ENCODE measurements at regions of chr11 and their contacts with region 1.

Region 1: DNA sequence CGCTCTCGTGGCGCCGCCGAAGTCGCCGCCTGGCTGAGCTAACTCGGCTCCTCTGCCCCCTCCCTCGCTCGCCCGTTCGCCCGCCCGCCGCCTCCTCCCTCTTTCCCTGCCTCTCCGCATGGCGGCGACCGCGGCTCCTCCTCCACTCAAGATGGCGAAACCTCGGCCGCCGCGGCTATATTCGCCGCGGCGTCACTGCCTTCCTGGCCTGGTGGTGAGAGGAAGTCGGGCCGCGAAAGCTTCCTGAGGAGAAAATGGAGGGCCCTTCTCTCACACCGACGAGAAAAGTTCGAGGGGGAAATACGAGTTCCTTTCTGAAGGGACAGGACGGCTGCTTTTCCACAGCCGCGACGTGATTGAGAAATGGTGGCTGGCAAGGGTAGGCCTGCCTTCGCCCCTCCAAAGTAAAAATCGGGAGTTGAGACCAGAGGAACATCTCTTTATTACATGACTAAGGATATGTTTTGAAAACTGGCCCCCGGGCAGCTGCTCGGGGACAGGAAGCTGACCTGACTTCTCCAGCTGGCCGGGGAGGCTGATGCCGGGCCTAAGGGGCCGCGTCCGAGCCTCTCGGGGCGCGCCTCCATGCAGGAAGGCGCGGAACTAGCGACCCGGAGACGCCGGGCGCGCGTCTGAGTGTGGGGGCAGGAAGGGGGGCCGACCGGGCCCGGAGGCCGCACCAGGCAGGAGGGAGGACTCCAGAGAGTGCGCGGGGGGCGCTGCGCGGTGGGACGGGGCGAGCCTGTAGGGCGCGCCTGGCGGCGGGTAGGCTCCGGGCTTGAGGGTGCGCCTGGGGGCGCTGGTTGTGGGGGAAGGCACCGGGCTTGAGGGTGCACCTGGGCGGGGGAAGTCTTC is at the start of gene DDX6:
- DNase-seq: peak; percentile 86 to 93 (median 91)
- H3K4me3 ChIP-seq: peak within 1 kb of the TSS; percentile 82 to 98 (median 95)
- H3K27ac ChIP-seq: peak within 1 kb of the TSS; percentile 98 to 99
- H3K4me1 ChIP-seq: peaks cover 5 to 33% (median 29%) of the 10 kb centered on the region in 4 experiments
- H3K27me3 ChIP-seq: no peaks in the 10 kb centered on the region

Region 2: DNA sequence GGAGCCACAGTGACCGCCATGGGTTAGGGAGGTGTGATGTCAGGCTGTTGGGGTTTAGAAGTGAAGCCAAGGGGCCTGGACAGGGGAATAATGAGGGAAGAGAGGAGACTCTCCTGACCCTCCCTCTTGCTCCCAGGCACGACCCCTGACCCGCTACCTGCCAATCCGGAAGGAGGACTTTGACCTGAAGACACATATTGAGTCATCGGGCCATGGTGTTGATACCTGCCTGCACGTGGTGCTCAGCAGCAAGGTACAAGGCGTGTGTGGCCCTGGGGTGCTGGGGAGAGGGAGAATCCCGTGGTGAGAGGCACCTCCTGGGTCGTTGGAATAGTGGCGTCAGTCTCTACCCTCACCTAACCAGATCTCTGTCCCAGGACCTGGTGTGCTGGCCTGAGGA is 141.4 kb before region 1 on chr11:
- CTCF ChIA-PET with region 1: no interaction called
- POLR2A ChIA-PET with region 1: no interaction called
- DNase-seq: no peak
- H3K4me3 ChIP-seq: no peak overlapping the region
- H3K27ac ChIP-seq: no peak overlapping the region
- H3K4me1 ChIP-seq: peaks cover 0 to 18% (median 13%) of the 10 kb centered on the region in 4 experiments
- H3K27me3 ChIP-seq: no peaks in the 10 kb centered on the region

Region 3: DNA sequence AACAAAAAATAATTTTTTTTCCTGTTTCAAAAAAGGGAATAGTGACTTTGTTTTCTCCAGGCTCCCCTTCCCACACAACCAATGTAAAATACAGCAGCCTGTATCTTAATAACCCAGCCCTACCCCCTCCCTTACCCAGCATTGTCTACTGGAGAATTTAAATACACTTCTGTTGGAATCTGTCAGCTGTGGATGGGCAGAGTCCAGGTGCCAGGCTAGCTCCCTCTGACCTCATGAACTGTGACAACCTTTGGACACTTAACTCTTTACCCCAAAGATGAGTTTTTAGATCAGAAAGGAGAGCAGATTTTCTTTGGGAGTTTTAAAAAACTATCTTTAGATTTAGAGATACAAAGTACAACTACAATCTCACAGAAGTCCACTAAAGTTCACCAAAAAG is 43.3 kb before region 1 on chr11:
- CTCF ChIA-PET with region 1: no interaction called
- POLR2A ChIA-PET with region 1: no interaction called
- DNase-seq: no peak
- H3K4me3 ChIP-seq: no peak overlapping the region
- H3K27ac ChIP-seq: no peak overlapping the region
- H3K4me1 ChIP-seq: no peaks in the 10 kb centered on the region
- H3K27me3 ChIP-seq: no peaks in the 10 kb centered on the region

Region 4: DNA sequence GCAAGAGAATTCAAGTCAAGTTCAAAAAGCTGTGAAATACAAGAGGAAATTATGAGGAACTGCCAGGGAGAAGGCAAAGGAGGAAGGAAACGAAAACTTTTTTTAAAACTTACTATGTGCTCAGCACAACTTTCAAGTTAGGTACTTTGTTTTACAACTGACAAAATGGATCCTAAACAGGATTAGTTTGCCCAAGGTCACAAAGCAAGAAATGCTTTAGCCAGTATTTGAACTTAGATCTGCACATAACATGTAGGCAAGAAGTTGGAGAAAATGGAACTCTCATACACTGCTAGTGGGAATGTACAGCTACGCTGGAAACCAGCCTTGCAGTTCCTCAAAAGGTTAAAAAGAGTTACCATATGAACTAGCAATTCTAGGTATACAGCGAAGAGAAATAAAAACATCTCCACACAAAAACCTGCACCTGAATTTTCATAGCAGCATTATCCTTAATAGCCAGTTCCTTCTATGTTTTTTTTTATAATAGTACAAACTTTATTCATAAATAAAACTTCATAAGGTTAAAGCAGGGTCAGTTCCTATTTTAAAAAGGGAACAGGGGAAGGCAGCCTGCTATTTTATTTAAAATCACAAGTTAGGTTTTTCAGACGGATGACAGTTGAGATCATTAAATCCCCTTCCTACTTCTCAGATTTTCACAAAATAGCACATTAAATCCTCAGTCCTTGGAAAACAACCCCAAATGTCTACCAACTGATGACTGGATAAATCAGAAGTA is 19.6 kb before region 1 on chr11:
- CTCF ChIA-PET with region 1: interaction called, 11 read pairs
- POLR2A ChIA-PET with region 1: interaction called, 4 read pairs
- DNase-seq: peak in 2 of 3 donors; percentile 26 to 41
- H3K4me3 ChIP-seq: peak overlapping the region in 3 of 7 experiments; percentile 1 to 39 (median 34)
- H3K27ac ChIP-seq: peak overlapping the region in 1 of 2 experiments; percentile 47
- H3K4me1 ChIP-seq: peaks cover 8 to 25% (median 18%) of the 10 kb centered on the region in 4 experiments
- H3K27me3 ChIP-seq: no peaks in the 10 kb centered on the region